Cardiac septum (tissue), 1 donor: ENCODE measurements at regions of chrX and their contacts with region 1.

Region 1: DNA sequence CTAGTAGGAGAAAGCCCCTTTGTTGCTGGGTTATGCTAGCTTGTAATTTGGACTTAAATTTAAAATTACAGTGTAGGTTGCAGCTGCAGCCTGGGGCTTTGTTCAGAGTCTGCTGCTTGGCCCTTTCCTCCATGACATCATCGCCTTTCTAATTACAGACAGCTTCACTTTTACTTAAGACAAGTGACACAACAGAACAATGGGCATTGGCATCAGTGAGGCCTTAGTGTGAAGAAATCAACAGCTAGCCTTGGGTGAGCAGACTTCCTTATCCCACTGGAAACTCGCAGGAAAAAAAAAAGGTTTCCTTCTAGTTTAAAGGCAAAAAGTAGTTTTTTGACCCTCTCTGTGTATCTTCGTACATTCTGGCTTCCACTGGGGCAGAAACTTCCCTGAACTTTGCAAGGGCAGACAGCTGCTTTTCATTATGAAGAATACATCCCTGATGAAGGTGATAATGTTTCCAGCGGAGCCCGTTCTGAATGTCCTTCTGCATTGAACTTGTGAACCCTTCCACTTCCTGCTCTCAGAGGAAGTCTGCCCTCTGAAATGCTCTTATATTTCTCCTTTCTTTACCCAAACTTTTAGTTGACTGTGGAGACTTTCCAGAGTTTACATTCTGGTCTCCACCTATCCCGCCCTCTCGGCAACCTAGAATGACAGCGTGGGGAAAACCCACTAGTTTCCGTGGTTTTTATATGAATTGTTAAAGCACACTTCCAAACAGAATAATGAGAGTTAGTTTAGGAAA is 123.2 kb upstream of the FAM9C start:
- DNase-seq: no peak

Region 2: GRCh38 chrX:12595720-12596119 is 571.9 kb before region 1 on chrX:
- intact Hi-C with region 1: no loop called
- DNase-seq: no peak

Region 3: DNA sequence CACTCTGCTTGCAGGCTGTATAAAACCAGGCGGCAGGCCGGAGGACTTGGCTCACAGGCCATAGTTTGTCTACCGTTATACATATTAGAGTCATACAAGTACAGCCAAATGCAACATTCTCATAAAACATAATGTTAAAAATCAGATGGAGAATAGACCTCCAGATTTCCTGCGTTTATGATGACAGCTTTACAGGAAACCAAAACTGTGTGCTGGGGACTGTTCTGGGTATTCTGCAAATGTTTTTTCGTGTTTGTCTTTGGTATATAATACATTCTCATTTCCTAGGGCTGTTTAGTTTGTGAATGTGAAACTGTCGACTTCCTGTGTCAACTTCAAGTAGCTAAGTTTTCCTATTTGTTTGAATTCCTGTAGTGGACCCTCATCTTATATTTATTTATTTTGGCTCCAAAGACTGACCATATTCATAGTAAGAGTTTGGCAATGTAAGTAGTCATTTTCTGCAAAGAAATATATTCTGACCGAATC is 43.8 kb before region 1 on chrX:
- intact Hi-C with region 1: loop called (anchors 5 kb)
- DNase-seq: no peak

Region 4: GRCh38 chrX:13212191-13212651 is 44.6 kb after region 1 on chrX:
- intact Hi-C with region 1: loop called (anchors 5 kb)
- DNase-seq: no peak